Common myeloid progenitor, CD34-positive (primary cell): ENCODE measurements at regions of chr1 and their contacts with region 1.

Region 1: GRCh38 chr1:10430216-10431069 is at the start of gene CENPS:
- DNase-seq: peak; percentile 83 to 92 (median 90)
- H3K4me3 ChIP-seq: peak within 1 kb of the TSS; percentile 64 to 99 (median 89)
- H3K27ac ChIP-seq: peak within 1 kb of the TSS; percentile 74 to 92
- H3K4me1 ChIP-seq: peaks cover 3 to 24% (median 16%) of the 10 kb centered on the region in 4 experiments
- H3K27me3 ChIP-seq: no peaks in the 10 kb centered on the region

Region 2: GRCh38 chr1:10378081-10378841 is 52.2 kb before region 1 on chr1:
- CTCF ChIA-PET with region 1: interaction called, 32 read pairs
- POLR2A ChIA-PET with region 1: no interaction called
- DNase-seq: peak in 2 of 3 donors; percentile 49 to 53
- H3K4me3 ChIP-seq: no peak overlapping the region
- H3K27ac ChIP-seq: no peak overlapping the region
- H3K4me1 ChIP-seq: peaks cover 0 to 4% (median 0%) of the 10 kb centered on the region in 4 experiments
- H3K27me3 ChIP-seq: no peaks in the 10 kb centered on the region

Region 3: GRCh38 chr1:10387413-10388079 is 42.9 kb before region 1 on chr1:
- CTCF ChIA-PET with region 1: interaction called, 19 read pairs
- POLR2A ChIA-PET with region 1: no interaction called
- DNase-seq: peak in 2 of 3 donors; percentile 25 to 56
- H3K4me3 ChIP-seq: peak overlapping the region in 2 of 7 experiments; percentile 42 to 45
- H3K27ac ChIP-seq: peak overlapping the region in 1 of 2 experiments; percentile 35
- H3K4me1 ChIP-seq: peaks cover 5 to 37% (median 16%) of the 10 kb centered on the region in 4 experiments
- H3K27me3 ChIP-seq: no peaks in the 10 kb centered on the region